H1 (cell line): ENCODE measurements at regions of chr1 and their contacts with region 1.

Region 1: GRCh38 chr1:205919026-205919746 is 24.1 kb downstream of the SLC26A9 start:
- DNase-seq: peak; percentile 70 to 92
- H3K4me3 ChIP-seq: no peak overlapping the region
- H3K27ac ChIP-seq: no peak overlapping the region
- H3K4me1 ChIP-seq: peaks cover 0 to 6% (median 2%) of the 10 kb centered on the region in 4 experiments; a peak in 4 of 7 replicates
- H3K27me3 ChIP-seq: no peaks in the 10 kb centered on the region; a peak in 1 of 7 replicates
- CTCF ChIP-seq: peak; percentile 84 to 99 (median 96)
- EP300 ChIP-seq: no peak
- POLR2A ChIP-seq: no peak
- RAD21 ChIP-seq: peak; percentile 98 to 99

Region 2: DNA sequence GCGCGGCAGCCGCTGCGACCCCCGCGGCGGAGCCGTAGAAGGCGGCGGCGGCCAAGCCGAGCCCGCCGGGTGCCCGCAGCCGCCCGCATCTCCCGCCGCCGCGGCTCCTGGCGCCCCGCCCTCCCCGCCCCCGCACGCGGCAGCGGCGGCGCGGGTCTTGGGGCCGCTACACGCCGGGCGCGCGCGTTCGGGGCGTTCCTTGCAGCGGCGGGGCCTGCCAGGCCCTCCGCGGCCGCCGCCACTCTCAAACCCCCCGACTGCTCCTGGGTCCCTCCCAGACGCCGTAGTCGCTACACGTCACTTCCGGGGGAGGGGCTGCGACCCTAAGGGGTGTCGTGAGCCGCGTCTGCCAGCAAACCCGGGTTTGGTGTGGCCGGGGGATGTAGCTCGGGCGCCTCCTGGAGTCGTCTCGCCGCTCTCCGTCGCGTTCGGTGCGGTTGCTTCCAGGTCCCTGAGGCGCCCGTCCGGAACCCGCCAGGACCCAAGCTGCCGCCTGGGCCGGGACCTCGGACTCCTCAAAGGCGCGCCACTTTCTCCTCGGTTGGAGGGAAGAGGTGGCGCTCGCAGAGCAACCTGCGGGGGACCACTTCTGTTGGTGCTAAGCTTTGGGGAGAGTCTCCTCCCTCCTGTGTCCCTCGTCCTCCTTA is 287.3 kb before region 1 on chr1 and contains the start of gene ELK4:
- CTCF ChIA-PET with region 1: no interaction called
- POLR2A ChIA-PET with region 1: no interaction called
- DNase-seq: peak; percentile 91 to 99
- H3K4me3 ChIP-seq: peak within 1 kb of the TSS; percentile 72 to 90 (median 78)
- H3K27ac ChIP-seq: peak within 1 kb of the TSS; percentile 93
- H3K4me1 ChIP-seq: no peaks in the 10 kb centered on the region; a peak in 2 of 7 replicates
- H3K27me3 ChIP-seq: no peaks in the 10 kb centered on the region
- CTCF ChIP-seq: peak; percentile 64 to 71 (median 65)
- EP300 ChIP-seq: peak in 1 of 2 experiments; percentile 14; a peak in 1 of 3 replicates
- POLR2A ChIP-seq: peak; percentile 83 to 95
- RAD21 ChIP-seq: peak; percentile 74 to 75
- total RNA-seq, gene ELK4: 23.3 and 26.3 TPM in 2 replicates

Region 3: GRCh38 chr1:205907794-205908193 is 11.4 kb before region 1 on chr1:
- CTCF ChIA-PET with region 1: interaction called, 28 read pairs
- POLR2A ChIA-PET with region 1: no interaction called
- DNase-seq: no peak
- H3K4me3 ChIP-seq: no peak overlapping the region
- H3K27ac ChIP-seq: no peak overlapping the region
- H3K4me1 ChIP-seq: no peaks in the 10 kb centered on the region
- H3K27me3 ChIP-seq: no peaks in the 10 kb centered on the region
- CTCF ChIP-seq: peak; percentile 70 to 79 (median 71)
- EP300 ChIP-seq: no peak
- POLR2A ChIP-seq: no peak
- RAD21 ChIP-seq: peak; percentile 71 to 79

Region 4: DNA sequence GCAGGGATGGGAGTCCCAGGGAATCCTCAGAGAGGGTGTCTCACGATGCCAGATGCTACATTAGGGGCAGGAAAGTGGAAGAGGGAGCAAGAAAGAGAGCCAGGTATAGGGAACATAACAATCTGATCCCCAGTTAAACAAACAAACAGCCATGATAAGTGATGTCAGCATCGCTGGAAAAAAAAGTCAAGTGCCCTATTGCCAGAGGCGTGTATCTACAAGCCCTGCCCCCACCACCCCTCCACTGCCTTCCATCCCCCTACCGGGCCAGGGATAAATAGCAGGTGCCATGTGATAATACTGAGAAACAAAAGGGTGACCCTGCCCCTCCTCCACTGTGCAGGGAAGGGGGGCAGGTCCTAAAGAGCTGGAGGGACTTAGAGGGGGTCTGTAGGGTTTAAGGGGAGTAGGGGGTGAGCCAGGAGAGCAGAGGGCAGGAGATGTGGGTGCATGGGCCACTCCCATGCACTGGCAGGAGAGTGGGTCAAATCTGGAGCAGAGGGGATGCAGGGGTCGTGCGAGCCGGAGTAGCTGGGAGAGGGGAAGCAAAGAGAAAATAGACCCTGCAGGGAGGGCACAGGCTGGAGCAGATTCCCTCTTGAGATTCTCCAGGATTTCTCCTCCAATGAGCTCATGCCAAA is 20.6 kb after region 1 on chr1:
- CTCF ChIA-PET with region 1: interaction called, 110 read pairs
- POLR2A ChIA-PET with region 1: interaction called, 3 read pairs
- DNase-seq: peak; percentile 44 to 81
- H3K4me3 ChIP-seq: no peak overlapping the region
- H3K27ac ChIP-seq: no peak overlapping the region
- H3K4me1 ChIP-seq: peaks cover 7 to 16% (median 14%) of the 10 kb centered on the region in 4 experiments
- H3K27me3 ChIP-seq: no peaks in the 10 kb centered on the region; a peak in 1 of 7 replicates
- CTCF ChIP-seq: peak; percentile 41 to 58 (median 50)
- EP300 ChIP-seq: no peak
- POLR2A ChIP-seq: no peak
- RAD21 ChIP-seq: peak in 1 of 2 experiments; percentile 23; a peak in 1 of 4 replicates

Region 5: GRCh38 chr1:205961405-205961804 is 42.2 kb after region 1 on chr1:
- CTCF ChIA-PET with region 1: interaction called, 17 read pairs
- POLR2A ChIA-PET with region 1: no interaction called
- DNase-seq: no peak
- H3K4me3 ChIP-seq: no peak overlapping the region
- H3K27ac ChIP-seq: no peak overlapping the region
- H3K4me1 ChIP-seq: peaks cover 0 to 9% (median 4%) of the 10 kb centered on the region in 4 experiments; a peak in 4 of 7 replicates
- H3K27me3 ChIP-seq: no peaks in the 10 kb centered on the region
- CTCF ChIP-seq: no peak
- EP300 ChIP-seq: no peak
- POLR2A ChIP-seq: no peak
- RAD21 ChIP-seq: no peak

Region 6: GRCh38 chr1:206106328-206107167 is 187.4 kb after region 1 on chr1:
- CTCF ChIA-PET with region 1: interaction called, 33 read pairs
- POLR2A ChIA-PET with region 1: no interaction called
- DNase-seq: peak; percentile 47 to 91
- H3K4me3 ChIP-seq: no peak overlapping the region
- H3K27ac ChIP-seq: no peak overlapping the region
- H3K4me1 ChIP-seq: no peaks in the 10 kb centered on the region
- H3K27me3 ChIP-seq: no peaks in the 10 kb centered on the region
- CTCF ChIP-seq: peak; percentile 92 to 95 (median 93)
- EP300 ChIP-seq: no peak
- POLR2A ChIP-seq: no peak
- RAD21 ChIP-seq: peak; percentile 93 to 96